Heart right ventricle (tissue), 16 donors: ENCODE measurements at regions of chr15 and their contacts with region 1.

Region 1: DNA sequence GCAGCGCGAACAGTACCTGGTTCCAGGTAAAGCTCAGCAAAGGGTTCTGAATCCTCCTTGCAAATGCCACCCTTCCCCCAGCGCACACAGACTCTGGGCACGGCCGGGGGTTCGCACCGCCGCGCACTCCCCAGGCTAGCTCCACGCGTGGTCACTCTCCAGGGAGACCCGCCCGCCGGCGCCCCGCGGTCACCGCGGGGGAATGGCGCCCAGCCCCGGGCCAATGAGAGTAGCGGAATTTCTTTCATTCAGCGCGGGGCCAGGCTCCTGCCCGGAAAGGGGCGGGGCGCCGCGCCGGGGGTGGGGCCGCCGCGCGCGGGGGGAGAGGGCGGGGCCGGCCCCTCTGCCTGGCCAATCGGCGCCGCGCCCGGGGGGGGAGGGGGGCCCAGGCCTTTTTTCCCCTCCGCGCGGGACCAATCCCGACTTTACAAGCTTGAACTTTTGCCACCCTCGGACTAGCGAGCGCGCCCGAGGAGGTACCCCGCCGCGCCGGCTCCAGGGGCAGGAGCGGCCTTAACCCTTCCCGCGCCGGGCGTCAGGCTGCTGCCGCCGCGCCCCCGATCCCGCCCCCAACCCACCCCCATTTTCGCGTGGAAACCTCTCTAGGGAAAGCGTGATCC is 1.1 kb upstream of the SMAD6 start:
- DNase-seq: peak; percentile 96
- ATAC-seq: peak; percentile 75 to 87 (median 84)
- H3K4me3 ChIP-seq: peak overlapping the region; percentile 62 to 85 (median 78)
- H3K27ac ChIP-seq: peak overlapping the region; percentile 57 to 97 (median 92)
- H3K4me1 ChIP-seq: peaks cover 4 to 51% (median 35%) of the 10 kb centered on the region in 9 donors
- H3K27me3 ChIP-seq: peaks cover 0 to 32% (median 0%) of the 10 kb centered on the region in 7 donors
- CTCF ChIP-seq: no peak

Region 2: GRCh38 chr15:66611257-66612053 is 89.5 kb before region 1 on chr15:
- intact Hi-C with region 1: loop called in 3 of 10 experiments (anchors 5 kb)
- DNase-seq: no peak
- ATAC-seq: peak in 2 of 8 donors; percentile 24 to 54
- H3K4me3 ChIP-seq: no peak overlapping the region
- H3K27ac ChIP-seq: no peak overlapping the region
- H3K4me1 ChIP-seq: peaks cover 0 to 33% (median 16%) of the 10 kb centered on the region in 9 donors
- H3K27me3 ChIP-seq: no peaks in the 10 kb centered on the region
- CTCF ChIP-seq: no peak

Region 3: DNA sequence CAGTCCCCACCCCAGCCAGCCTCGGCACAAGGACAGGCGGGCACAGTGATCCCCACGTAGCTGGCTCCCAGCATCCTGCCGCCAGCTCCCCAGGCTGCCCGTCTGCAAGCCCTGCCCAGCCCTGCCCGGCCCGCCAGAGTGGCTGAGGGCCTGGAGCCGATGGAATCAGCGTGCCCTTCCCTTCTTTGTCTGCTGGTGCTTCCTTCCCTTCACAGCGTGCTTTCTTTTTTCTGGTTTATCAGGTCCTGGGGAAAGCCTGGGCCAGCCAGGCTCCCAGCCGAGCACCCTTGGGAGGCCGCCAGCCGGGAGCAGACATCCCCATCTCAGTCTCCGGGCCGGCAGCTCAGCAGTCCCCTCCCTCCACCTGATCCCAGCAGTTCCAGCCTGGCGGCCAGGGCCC is 53.6 kb before region 1 on chr15:
- intact Hi-C with region 1: loop called in 1 of 10 experiments (anchors 5 kb)
- DNase-seq: peak; percentile 44 to 64
- ATAC-seq: peak; percentile 34 to 81 (median 63)
- H3K4me3 ChIP-seq: peak overlapping the region in 1 of 10 donors; percentile 14
- H3K27ac ChIP-seq: peak overlapping the region; percentile 41 to 86 (median 70)
- H3K4me1 ChIP-seq: peaks cover 19 to 69% (median 37%) of the 10 kb centered on the region in 9 donors
- H3K27me3 ChIP-seq: no peaks in the 10 kb centered on the region
- CTCF ChIP-seq: no peak

Region 4: DNA sequence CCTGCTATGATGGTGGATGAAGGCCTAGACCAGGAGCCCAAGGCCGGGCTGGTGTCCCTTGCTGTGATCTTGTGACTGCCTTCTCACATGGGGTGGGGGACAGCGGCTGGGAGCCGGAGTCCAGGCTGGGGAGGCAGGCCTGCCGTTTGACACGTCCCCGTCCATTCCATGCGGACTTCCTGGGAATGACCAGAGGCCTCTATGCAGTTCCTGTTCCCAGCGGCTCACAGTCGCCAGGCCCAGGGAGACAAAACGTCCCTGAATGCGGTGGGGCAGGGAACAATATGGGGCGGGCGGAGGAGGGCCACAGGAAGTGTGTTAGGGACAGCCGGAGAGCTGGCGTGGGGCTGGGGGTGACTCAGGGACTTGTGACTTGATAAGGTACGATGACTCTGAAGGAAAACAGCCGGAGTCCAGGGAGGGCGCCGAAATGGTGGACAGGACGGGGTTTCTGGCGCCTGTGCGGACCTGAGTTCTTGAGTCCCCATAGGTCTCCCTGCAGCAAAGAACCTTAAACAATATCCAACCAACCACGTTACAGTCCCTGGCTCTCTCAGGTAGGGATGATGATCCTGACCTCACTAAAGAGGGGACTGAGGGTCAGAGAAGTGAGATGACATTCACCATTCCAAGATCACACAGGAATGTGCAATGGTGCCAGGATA is 39.3 kb before region 1 on chr15:
- intact Hi-C with region 1: loop called in 2 of 10 experiments (anchors 5 kb)
- DNase-seq: peak; percentile 66 to 86
- ATAC-seq: peak; percentile 80 to 95 (median 90)
- H3K4me3 ChIP-seq: no peak overlapping the region
- H3K27ac ChIP-seq: peak overlapping the region; percentile 77 to 93 (median 84)
- H3K4me1 ChIP-seq: peaks cover 4 to 56% (median 8%) of the 10 kb centered on the region in 9 donors
- H3K27me3 ChIP-seq: no peaks in the 10 kb centered on the region
- CTCF ChIP-seq: no peak

Region 5: GRCh38 chr15:66774001-66774814 is 73.3 kb after region 1 on chr15:
- intact Hi-C with region 1: loop called in 8 of 10 experiments (anchors 1 to 10 kb)
- DNase-seq: peak; percentile 89
- ATAC-seq: peak; percentile 86 to 96 (median 92)
- H3K4me3 ChIP-seq: no peak overlapping the region
- H3K27ac ChIP-seq: peak overlapping the region in 8 of 10 donors; percentile 59 to 80 (median 72)
- H3K4me1 ChIP-seq: peaks cover 12 to 93% (median 58%) of the 10 kb centered on the region in 9 donors
- H3K27me3 ChIP-seq: no peaks in the 10 kb centered on the region
- CTCF ChIP-seq: peak; percentile 94 to 100 (median 96)

Region 6: DNA sequence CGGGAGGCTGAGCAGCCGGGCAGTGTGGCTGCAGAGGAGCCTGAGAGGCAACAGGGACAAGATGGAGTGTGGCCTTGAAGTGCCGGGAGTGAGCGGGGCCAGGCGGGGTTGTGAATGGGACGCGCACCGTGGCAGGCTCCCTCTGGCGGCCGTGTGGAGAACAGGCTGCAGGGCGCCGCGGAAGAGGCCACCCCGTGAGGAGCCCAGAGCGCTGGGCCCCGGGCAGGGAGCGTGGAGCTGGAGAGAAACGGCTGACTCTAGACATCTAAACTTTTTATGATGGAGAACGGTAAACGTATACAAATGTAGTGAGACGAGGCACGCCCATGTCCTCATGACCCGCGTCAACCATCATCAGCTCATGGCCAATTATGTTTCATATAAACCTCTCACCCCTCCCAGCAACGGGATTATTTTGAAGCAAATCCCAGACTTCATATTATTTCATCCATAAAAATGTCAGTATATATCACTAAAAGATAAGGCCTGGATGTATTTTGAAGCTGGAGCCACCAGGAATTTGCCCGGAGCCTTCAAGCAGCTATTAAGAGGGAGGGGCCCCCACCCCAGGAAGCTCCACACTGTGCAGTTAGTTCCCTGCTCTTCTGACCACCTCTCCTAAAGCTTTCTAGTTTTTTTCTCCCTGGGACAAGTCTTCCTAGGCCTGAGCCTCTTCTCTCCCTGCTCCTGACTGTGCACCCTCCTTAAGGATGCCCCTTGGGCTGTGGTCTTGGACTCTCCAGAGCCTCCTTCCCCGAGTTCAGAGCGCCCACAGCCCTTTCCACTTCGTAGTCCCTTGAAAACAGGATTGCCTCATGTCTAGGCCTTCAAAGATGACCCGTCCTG is 150.5 kb after region 1 on chr15:
- intact Hi-C with region 1: loop called in 7 of 10 experiments (anchors 2 to 5 kb)
- DNase-seq: peak; percentile 87 to 88
- ATAC-seq: peak; percentile 86 to 94 (median 90)
- H3K4me3 ChIP-seq: peak overlapping the region in 3 of 10 donors; percentile 10 to 23 (median 12)
- H3K27ac ChIP-seq: peak overlapping the region in 8 of 10 donors; percentile 72 to 92 (median 79)
- H3K4me1 ChIP-seq: peaks cover 15 to 38% (median 33%) of the 10 kb centered on the region in 9 donors
- H3K27me3 ChIP-seq: no peaks in the 10 kb centered on the region
- CTCF ChIP-seq: peak; percentile 94 to 99 (median 98)